A673 (cell line): ENCODE measurements at regions of chr13 and their contacts with region 1.

Region 1: DNA sequence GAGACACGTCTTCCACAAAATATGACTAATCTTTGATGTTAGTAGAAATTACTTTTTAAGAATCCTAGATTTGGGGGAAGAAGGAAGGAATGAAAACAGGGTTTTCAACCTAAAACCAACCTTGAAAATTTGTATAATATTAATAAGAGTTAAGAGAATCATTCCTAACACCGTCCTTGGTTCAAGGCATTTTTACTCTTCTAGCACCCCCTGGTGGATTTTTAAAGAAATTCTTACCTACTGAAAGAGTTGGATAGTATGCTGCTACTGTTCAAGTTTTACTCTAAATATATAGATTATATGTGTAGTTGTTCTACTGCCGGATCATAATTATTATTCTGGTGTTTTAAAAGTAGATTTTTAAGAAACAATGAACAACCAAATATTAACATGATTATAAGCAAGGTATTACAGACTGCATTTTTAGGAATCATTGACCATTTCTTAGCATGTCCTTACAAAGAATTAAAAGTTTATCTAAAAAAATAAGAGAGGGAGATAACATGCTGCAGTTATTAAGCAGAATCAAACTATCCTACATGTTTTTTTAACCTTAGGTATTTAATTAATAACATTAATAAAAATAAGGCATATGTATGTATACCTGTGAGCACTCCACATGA is 7.4 kb upstream of the SLITRK6 start:
- DNase-seq: peak; percentile 74
- H3K4me3 ChIP-seq: no peak overlapping the region
- H3K27ac ChIP-seq: no peak overlapping the region
- H3K4me1 ChIP-seq: no peaks in the 10 kb centered on the region
- H3K27me3 ChIP-seq: no peaks in the 10 kb centered on the region
- CTCF ChIP-seq: peak; percentile 71

Region 2: GRCh38 chr13:84844473-84844872 is 962.2 kb before region 1 on chr13:
- CTCF ChIA-PET with region 1: no interaction called
- POLR2A ChIA-PET with region 1: no interaction called
- intact Hi-C with region 1: loop called (anchors 2 kb)
- DNase-seq: peak; percentile 48
- H3K4me3 ChIP-seq: no peak overlapping the region
- H3K27ac ChIP-seq: no peak overlapping the region
- H3K4me1 ChIP-seq: no peaks in the 10 kb centered on the region
- H3K27me3 ChIP-seq: no peaks in the 10 kb centered on the region
- CTCF ChIP-seq: peak; percentile 69

Region 3: GRCh38 chr13:84896128-84896527 is 910.5 kb before region 1 on chr13:
- CTCF ChIA-PET with region 1: no interaction called
- POLR2A ChIA-PET with region 1: no interaction called
- intact Hi-C with region 1: loop called (anchors 1 kb)
- DNase-seq: peak; percentile 77
- H3K4me3 ChIP-seq: no peak overlapping the region
- H3K27ac ChIP-seq: no peak overlapping the region
- H3K4me1 ChIP-seq: no peaks in the 10 kb centered on the region
- H3K27me3 ChIP-seq: no peaks in the 10 kb centered on the region
- CTCF ChIP-seq: peak; percentile 73

Region 4: GRCh38 chr13:84917252-84917878 is 889.3 kb before region 1 on chr13:
- CTCF ChIA-PET with region 1: interaction called, 5 read pairs
- POLR2A ChIA-PET with region 1: no interaction called
- intact Hi-C with region 1: loop called (anchors 1 kb)
- DNase-seq: peak; percentile 46
- H3K4me3 ChIP-seq: no peak overlapping the region
- H3K27ac ChIP-seq: no peak overlapping the region
- H3K4me1 ChIP-seq: no peaks in the 10 kb centered on the region
- H3K27me3 ChIP-seq: no peaks in the 10 kb centered on the region
- CTCF ChIP-seq: peak; percentile 61

Region 5: GRCh38 chr13:85420136-85420535 is 386.5 kb before region 1 on chr13:
- CTCF ChIA-PET with region 1: no interaction called
- POLR2A ChIA-PET with region 1: no interaction called
- intact Hi-C with region 1: loop called (anchors 5 kb)
- DNase-seq: no peak
- H3K4me3 ChIP-seq: no peak overlapping the region
- H3K27ac ChIP-seq: no peak overlapping the region
- H3K4me1 ChIP-seq: no peaks in the 10 kb centered on the region
- H3K27me3 ChIP-seq: no peaks in the 10 kb centered on the region
- CTCF ChIP-seq: no peak

Region 6: DNA sequence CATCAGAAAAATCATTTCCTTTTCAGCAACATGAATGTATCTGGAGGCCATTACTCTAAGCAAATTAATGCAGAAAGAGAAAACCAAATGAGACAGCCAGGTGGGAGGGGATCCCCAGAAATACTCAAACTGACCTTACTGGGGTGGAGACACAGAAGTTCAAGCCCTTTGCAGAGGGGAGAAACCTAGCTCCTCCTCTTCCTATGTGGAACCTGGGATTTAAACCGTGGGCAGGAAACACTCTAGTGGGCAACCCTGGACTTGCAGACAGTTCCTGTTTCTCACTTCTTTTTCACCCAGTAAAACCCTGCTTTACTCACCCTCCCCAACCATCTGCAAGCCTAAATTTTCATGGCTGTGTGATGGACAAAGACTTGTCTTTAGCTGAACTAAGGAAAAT is 68.7 kb before region 1 on chr13:
- CTCF ChIA-PET with region 1: no interaction called
- POLR2A ChIA-PET with region 1: no interaction called
- intact Hi-C with region 1: no loop called
- DNase-seq: no peak
- H3K4me3 ChIP-seq: no peak overlapping the region
- H3K27ac ChIP-seq: no peak overlapping the region
- H3K4me1 ChIP-seq: no peaks in the 10 kb centered on the region
- H3K27me3 ChIP-seq: no peaks in the 10 kb centered on the region
- CTCF ChIP-seq: no peak

Region 7: GRCh38 chr13:85853901-85854663 is 47.4 kb after region 1 on chr13:
- CTCF ChIA-PET with region 1: no interaction called
- POLR2A ChIA-PET with region 1: no interaction called
- intact Hi-C with region 1: no loop called
- DNase-seq: no peak
- H3K4me3 ChIP-seq: no peak overlapping the region
- H3K27ac ChIP-seq: no peak overlapping the region
- H3K4me1 ChIP-seq: no peaks in the 10 kb centered on the region
- H3K27me3 ChIP-seq: no peaks in the 10 kb centered on the region
- CTCF ChIP-seq: no peak

Region 8: GRCh38 chr13:86003029-86003428 is 196.4 kb after region 1 on chr13:
- CTCF ChIA-PET with region 1: no interaction called
- POLR2A ChIA-PET with region 1: no interaction called
- intact Hi-C with region 1: no loop called
- DNase-seq: no peak
- H3K4me3 ChIP-seq: no peak overlapping the region
- H3K27ac ChIP-seq: no peak overlapping the region
- H3K4me1 ChIP-seq: no peaks in the 10 kb centered on the region
- H3K27me3 ChIP-seq: no peaks in the 10 kb centered on the region
- CTCF ChIP-seq: no peak